ENCODE measurements at regions of chr4 and their contacts with region 1.

Region 1: DNA sequence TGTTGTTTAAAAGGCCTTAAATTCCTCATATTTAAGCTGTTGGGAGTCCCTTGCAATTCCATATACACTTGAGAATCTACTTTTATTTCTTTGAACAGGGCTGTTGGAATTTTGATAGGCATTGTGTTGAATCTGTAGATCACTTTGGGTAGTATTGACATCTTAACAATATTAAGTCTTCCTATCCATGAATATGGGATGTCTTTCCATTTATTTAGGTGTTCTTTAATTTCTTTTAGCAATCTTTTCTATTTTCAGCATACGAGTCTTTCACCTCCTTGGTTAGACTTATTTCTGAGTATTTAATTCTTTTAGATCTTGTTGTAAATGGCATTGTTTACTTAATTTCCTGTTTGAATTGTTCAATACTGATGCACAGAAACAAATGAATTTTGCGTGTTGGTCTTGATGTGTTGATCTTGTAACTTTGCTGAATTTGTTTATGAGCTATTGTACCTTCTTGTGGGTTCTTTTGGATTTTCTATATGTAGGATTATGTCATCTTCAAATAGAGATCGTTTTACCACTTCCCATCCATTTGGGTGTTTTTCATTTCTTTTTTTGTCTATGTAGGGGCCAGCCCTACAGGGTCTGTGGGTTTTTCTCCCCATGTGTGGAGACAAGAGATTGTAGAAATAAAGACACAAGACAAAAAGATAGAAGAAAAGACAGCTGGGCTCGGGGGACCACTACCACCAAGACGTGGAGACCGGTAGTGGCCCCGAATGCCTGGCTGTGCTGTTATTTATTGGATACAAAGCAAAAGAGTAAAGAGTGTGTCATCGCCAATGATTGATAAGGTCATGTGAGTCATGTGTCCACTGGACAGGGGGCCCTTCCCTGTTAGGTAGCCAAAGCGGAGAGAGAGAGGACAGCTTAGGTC is 18.2 kb upstream of the CTBP1 start:
- DNase-seq: no peak
- H3K4me3 ChIP-seq: no peak overlapping the region
- H3K27ac ChIP-seq: no peak overlapping the region
- H3K4me1 ChIP-seq: no peaks in the 10 kb centered on the region
- H3K27me3 ChIP-seq: peaks cover 9% of the 10 kb centered on the region; the same call in 1 of the 2 replicates
- CTCF ChIP-seq: no peak

Region 2: DNA sequence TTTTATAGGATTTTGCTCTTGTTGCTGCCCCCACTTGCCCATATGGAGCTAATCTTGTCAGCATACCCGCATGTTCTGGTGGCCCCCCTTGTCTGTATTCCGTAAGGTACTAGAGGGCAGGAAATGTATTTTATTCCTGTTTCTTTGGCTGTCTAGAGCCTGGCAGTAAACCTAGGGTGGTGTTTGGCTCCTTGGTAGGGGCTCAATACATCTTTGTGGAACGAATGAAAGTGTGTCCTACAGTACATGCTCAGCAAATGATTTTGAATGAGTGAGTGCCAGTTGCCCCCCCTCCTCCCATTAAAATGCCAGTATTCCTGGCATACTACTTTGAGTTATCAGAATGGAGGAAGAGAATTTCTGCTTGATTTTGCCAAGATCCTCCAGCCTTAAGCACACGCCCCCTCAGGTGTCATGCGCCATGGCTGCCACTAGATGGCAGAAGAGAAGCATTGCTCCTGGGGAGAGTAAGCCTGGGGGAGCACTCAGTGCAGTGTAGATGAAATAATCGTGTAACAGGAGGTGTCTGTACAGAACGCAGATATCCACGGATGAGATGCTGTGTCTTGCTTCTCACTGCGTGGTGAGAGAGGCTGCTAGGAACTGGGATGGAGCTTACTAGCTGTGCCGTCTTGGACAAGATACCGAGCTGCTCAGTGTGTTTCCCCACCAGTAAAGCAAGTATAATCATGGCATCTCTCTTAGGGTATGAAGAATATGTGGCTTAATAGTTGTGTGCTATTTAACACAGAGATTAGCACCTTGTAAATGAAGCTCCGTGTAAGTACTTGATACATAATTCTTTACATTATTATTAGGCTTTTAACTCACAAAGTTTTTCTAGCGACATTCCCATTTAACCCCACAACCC is 136.6 kb before region 1 on chr4:
- CTCF ChIA-PET with region 1: no interaction called
- POLR2A ChIA-PET with region 1: no interaction called
- intact Hi-C with region 1: loop called (anchors 5 kb)
- DNase-seq: peak; percentile 60 to 63
- H3K4me3 ChIP-seq: no peak overlapping the region
- H3K27ac ChIP-seq: no peak overlapping the region
- H3K4me1 ChIP-seq: no peaks in the 10 kb centered on the region
- H3K27me3 ChIP-seq: peaks cover 22% of the 10 kb centered on the region; the same call in 1 of the 2 replicates
- CTCF ChIP-seq: peak; percentile 99

Measured in PC-9 (cell line).